Activated CD4-positive, alpha-beta memory T cell treated with anti-CD3 and anti-CD28 coated beads, Interleukin-2, amount 10 ng/mL, durations not matched to agents 7 days and 5 days (primary cell): ENCODE measurements at regions of chr1 and their contacts with region 1.

Region 1: DNA sequence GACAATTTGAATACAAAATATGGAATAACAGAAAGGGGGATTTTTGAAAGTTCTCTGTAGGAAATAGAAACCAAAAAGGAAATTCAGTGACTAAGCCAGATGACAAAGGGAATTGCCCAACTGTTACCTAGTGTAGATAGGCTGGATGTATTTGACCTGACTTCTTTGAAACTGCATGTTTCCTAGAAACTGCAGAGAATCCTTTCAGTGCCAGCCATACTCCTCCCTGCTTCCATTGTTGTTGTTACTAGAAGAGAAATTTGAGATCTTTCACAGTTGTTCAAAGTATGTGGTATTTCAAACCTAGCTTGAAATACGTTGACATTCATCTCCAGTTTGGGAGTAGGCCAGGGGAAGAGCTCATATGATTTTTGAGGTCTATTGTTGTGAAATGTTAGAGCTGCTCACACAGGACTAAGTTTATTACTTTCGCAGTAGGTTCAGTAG is 1.8 kb upstream of the GBP5 start:
- DNase-seq: no peak
- H3K4me3 Mint-ChIP-seq: peak overlapping the region; percentile 77
- H3K27ac Mint-ChIP-seq: peak overlapping the region; percentile 97
- H3K4me1 Mint-ChIP-seq: peaks cover 71% of the 10 kb centered on the region
- H3K27me3 Mint-ChIP-seq: no peaks in the 10 kb centered on the region

Region 2: GRCh38 chr1:88983791-88984559 is 290.5 kb before region 1 on chr1:
- CTCF ChIA-PET with region 1: interaction called, 22 read pairs
- POLR2A ChIA-PET with region 1: interaction called, 10 read pairs
- DNase-seq: peak; percentile 32
- H3K4me3 Mint-ChIP-seq: peak overlapping the region; percentile 61
- H3K27ac Mint-ChIP-seq: peak overlapping the region; percentile 65
- H3K4me1 Mint-ChIP-seq: peaks cover 83% of the 10 kb centered on the region
- H3K27me3 Mint-ChIP-seq: no peaks in the 10 kb centered on the region

Region 3: DNA sequence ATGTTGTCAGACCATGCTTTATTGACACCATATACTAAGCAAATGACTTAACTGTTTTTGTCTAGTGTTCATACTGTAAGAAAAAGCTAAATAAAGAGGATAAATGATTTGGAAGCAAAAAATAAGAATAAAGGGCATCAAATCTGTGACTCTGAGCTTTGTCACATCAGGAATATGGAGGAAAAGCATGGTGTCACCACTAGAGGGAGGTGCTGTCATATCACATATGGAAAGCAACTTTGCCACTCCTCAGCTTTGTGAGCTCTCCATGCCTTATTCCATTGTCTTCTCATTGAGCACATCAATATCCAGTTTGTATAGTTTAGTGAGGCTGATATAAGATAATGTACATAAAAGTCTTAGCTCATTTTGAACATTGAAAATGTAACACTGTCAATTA is 188.7 kb before region 1 on chr1:
- CTCF ChIA-PET with region 1: interaction called, 11 read pairs
- POLR2A ChIA-PET with region 1: interaction called, 5 read pairs
- DNase-seq: peak; percentile 41
- H3K4me3 Mint-ChIP-seq: no peak overlapping the region
- H3K27ac Mint-ChIP-seq: no peak overlapping the region
- H3K4me1 Mint-ChIP-seq: peaks cover 6% of the 10 kb centered on the region
- H3K27me3 Mint-ChIP-seq: no peaks in the 10 kb centered on the region

Region 4: DNA sequence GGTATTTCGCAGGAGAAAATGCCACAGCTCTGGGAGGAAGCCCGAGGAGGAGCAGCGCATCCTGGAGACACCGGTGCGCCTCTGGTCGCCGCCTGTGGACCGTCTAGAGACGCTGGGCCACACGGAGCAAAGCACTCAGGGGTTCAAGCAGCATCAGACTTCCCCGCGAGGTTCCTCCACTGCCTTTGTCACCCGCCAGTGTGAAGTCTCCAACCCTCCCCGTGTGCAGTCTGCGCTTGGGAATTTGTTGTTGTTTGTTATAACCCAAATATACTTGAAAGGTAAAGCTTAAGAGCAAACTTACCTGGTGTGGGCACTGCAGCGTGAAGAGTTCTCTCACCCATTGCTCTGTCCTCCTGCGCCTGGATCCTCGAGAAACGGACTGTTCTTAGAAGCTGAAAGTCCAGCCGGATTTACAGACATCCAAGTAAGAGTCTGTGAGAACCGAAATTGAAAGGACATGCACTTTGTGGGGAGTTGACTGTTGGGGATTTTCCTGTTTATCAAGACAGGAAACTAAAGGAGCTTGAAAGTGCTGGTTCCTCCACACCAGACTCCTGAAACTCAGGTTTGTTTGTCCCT is 75.9 kb before region 1 on chr1 and contains the start of gene GBP4:
- CTCF ChIA-PET with region 1: interaction called, 10 read pairs
- POLR2A ChIA-PET with region 1: interaction called, 77 read pairs
- DNase-seq: peak; percentile 59
- H3K4me3 Mint-ChIP-seq: peak within 1 kb of the TSS; percentile 91
- H3K27ac Mint-ChIP-seq: peak within 1 kb of the TSS; percentile 89
- H3K4me1 Mint-ChIP-seq: peaks cover 63% of the 10 kb centered on the region
- H3K27me3 Mint-ChIP-seq: no peaks in the 10 kb centered on the region
- total RNA-seq, gene GBP4: 61.6 to 70.6 TPM

Region 5: DNA sequence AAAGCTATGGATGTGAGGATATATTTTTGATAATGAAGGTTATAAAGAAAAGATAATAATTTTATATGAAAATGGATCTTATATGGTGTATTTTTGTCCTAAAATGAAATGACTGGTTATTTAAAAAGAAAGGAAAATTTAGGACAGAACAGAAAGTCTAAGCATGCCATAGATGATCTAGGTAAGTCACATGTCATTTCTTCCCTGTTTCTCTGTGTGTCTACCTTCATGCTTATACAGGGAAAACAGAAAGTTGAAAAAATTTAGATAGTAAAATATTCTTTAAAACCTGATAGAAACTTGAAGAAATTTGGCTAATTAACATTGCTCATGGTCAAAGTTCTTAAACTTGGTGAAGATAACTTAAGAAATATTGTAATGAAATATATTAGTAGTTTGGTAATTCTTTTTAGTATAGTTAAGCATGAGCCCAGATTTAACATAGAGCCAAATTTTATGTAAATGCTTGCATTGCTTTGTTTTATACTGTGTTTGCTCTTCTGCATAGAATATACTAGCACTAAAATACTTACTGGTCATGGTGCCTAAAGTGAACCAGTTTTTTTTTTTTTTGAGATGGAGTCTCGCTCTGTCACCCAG is 63.3 kb before region 1 on chr1:
- CTCF ChIA-PET with region 1: no interaction called
- POLR2A ChIA-PET with region 1: no interaction called
- DNase-seq: no peak
- H3K4me3 Mint-ChIP-seq: no peak overlapping the region
- H3K27ac Mint-ChIP-seq: no peak overlapping the region
- H3K4me1 Mint-ChIP-seq: peaks cover 2% of the 10 kb centered on the region
- H3K27me3 Mint-ChIP-seq: no peaks in the 10 kb centered on the region

Region 6: DNA sequence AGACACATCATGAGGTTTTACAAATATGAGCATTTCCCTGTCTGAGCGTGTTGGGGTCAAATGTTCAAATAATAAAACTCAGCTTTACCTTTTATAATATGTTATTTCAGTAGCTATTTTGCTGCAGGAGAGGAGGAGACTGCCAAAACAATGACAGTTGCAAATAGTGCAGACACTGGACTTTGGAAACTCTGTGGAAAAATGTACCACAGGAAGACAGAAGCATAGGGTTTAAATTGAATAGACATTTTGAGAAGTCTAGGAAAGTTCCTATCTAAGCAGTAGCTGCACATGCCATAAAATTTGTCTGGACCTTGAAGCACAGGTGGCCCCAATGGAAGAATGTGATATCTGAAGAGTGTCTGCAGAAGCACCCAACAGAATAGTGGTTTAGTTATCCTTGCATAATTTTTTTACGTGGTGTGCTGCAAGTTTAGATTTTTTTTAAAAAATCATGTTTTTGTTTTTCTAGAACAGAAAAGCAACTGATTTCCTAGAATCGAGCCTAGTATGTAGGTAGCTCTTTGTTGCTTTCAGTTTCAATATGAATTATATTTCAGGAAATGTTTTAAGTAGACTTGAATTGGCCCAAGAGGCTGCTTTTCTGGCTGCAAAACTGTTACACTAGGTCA is 12.2 kb after region 1 on chr1:
- CTCF ChIA-PET with region 1: interaction called, 42 read pairs
- POLR2A ChIA-PET with region 1: interaction called, 171 read pairs
- DNase-seq: peak; percentile 28
- H3K4me3 Mint-ChIP-seq: peak overlapping the region; percentile 43
- H3K27ac Mint-ChIP-seq: peak overlapping the region; percentile 94
- H3K4me1 Mint-ChIP-seq: peaks cover 69% of the 10 kb centered on the region
- H3K27me3 Mint-ChIP-seq: no peaks in the 10 kb centered on the region

Region 7: GRCh38 chr1:89310505-89310904 is 36.1 kb after region 1 on chr1:
- CTCF ChIA-PET with region 1: interaction called, 12 read pairs
- POLR2A ChIA-PET with region 1: interaction called, 92 read pairs
- DNase-seq: no peak
- H3K4me3 Mint-ChIP-seq: peak overlapping the region; percentile 26
- H3K27ac Mint-ChIP-seq: peak overlapping the region; percentile 94
- H3K4me1 Mint-ChIP-seq: peaks cover 44% of the 10 kb centered on the region
- H3K27me3 Mint-ChIP-seq: no peaks in the 10 kb centered on the region

Region 8: DNA sequence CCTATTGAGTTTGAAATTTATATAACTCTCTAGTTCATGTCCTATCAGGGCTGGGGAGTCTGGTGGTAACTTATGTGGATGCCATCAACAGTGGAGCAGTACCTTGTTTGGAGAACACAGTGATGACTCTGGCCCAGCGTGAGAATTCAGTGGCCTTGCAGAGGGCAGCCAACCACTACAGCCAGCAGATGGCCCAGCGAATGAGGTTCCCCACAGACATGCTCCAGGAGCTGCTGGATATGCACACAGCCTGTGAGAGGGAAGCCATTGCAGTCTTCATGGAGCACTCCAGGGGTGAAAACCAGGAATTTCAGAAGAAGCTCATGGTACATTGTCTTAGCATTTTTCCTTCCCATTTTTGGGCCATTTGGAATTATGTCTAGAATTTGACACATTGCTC is 57.5 kb after region 1 on chr1:
- CTCF ChIA-PET with region 1: no interaction called
- POLR2A ChIA-PET with region 1: no interaction called
- DNase-seq: no peak
- H3K4me3 Mint-ChIP-seq: no peak overlapping the region
- H3K27ac Mint-ChIP-seq: no peak overlapping the region
- H3K4me1 Mint-ChIP-seq: no peaks in the 10 kb centered on the region
- H3K27me3 Mint-ChIP-seq: no peaks in the 10 kb centered on the region

Region 9: DNA sequence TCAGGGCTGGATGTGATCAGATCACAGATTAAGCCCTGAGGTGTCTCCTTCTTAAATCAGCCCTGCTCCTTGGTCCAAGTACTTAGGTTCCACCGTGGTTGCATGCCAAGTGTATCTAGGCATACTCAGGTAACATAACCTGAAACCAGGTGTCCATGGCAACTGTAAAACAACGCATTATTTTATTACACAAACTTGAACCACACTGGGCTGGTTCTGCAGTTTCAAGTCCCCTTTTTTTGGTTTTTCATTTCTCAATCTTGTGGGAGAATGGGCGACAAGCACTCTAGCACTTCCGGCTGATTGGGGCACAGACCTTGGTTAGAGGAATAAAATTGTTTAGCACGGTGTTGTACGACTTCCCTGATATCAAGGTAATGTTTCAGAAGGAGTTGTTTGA is 154.6 kb after region 1 on chr1:
- CTCF ChIA-PET with region 1: no interaction called
- POLR2A ChIA-PET with region 1: no interaction called
- DNase-seq: no peak
- H3K4me3 Mint-ChIP-seq: no peak overlapping the region
- H3K27ac Mint-ChIP-seq: no peak overlapping the region
- H3K4me1 Mint-ChIP-seq: peaks cover 3% of the 10 kb centered on the region
- H3K27me3 Mint-ChIP-seq: no peaks in the 10 kb centered on the region